ENCODE measurements at regions of chr5 and their contacts with region 1.

Region 1: GRCh38 chr5:67773411-67774266 is 441.9 kb upstream of the PIK3R1 start:
- DNase-seq: peak; percentile 40 to 76
- H3K4me3 ChIP-seq: no peak overlapping the region
- H3K4me3 Mint-ChIP-seq: no peak overlapping the region
- H3K27ac Mint-ChIP-seq: peak overlapping the region; percentile 72
- H3K4me1 ChIP-seq: peaks cover 60% of the 10 kb centered on the region
- H3K4me1 Mint-ChIP-seq: peaks cover 40% of the 10 kb centered on the region
- H3K27me3 ChIP-seq: no peaks in the 10 kb centered on the region
- H3K27me3 Mint-ChIP-seq: no peaks in the 10 kb centered on the region
- CTCF ChIP-seq: no peak

Region 2: DNA sequence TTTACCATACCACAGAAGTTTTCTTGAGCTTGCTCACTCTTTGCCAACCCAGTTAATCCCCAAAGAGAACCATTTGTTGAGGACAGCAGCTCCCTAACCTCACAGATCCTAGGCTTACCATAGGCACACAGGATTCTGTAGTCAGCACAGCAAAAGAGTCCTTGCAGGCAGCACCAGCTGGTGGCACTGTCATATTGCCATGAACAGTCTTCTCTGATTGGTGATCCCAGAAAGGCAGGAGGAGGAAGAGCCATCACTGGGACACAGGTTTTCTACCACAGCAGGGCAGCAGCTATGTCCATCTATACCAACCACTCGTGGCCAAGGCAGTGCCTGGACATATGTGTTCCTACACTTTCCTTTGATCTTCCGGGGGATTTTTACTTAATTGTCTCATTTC is 280.0 kb before region 1 on chr5:
- CTCF ChIA-PET with region 1: no interaction called
- POLR2A ChIA-PET with region 1: no interaction called
- intact Hi-C with region 1: loop called (anchors 2 kb)
- DNase-seq: peak; percentile 62 to 64
- H3K4me3 ChIP-seq: no peak overlapping the region
- H3K4me3 Mint-ChIP-seq: no peak overlapping the region
- H3K27ac Mint-ChIP-seq: peak overlapping the region; percentile 68
- H3K4me1 ChIP-seq: no peaks in the 10 kb centered on the region
- H3K4me1 Mint-ChIP-seq: no peaks in the 10 kb centered on the region
- H3K27me3 ChIP-seq: no peaks in the 10 kb centered on the region
- H3K27me3 Mint-ChIP-seq: no peaks in the 10 kb centered on the region
- CTCF ChIP-seq: peak; percentile 23 to 62

Region 3: DNA sequence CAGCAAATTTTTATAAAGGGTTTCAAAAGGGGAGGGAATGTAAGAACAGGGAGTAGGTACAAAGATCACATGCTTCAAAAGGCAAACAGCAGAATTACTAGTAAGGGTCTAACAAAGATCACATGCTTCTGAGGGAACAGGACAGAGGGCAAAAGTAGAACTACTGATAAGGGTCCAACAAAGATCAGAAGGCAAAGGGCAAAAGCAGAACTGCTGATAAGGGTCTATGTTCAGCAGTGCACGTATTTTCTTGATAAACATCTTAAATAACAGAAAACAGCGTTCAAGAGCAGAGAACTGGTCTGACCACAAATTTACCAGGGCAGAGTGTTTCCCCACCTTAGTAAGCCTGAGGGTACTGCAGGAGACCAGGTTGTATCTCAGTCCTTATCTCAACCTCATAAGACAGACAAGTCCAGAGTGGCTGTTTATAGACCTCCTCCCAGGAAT is 27.5 kb before region 1 on chr5:
- CTCF ChIA-PET with region 1: no interaction called
- POLR2A ChIA-PET with region 1: no interaction called
- intact Hi-C with region 1: loop called (anchors 1 kb)
- DNase-seq: peak; percentile 83 to 89
- H3K4me3 ChIP-seq: no peak overlapping the region
- H3K4me3 Mint-ChIP-seq: peak overlapping the region; percentile 3
- H3K27ac Mint-ChIP-seq: peak overlapping the region; percentile 92
- H3K4me1 ChIP-seq: peaks cover 39% of the 10 kb centered on the region
- H3K4me1 Mint-ChIP-seq: peaks cover 25% of the 10 kb centered on the region
- H3K27me3 ChIP-seq: no peaks in the 10 kb centered on the region
- H3K27me3 Mint-ChIP-seq: no peaks in the 10 kb centered on the region
- CTCF ChIP-seq: no peak

Region 4: GRCh38 chr5:67815455-67816391 is 42.1 kb after region 1 on chr5:
- CTCF ChIA-PET with region 1: interaction called, 4 read pairs
- POLR2A ChIA-PET with region 1: no interaction called
- intact Hi-C with region 1: loop called (anchors 1 kb)
- DNase-seq: peak in 1 of 2 experiments; percentile 18
- H3K4me3 ChIP-seq: no peak overlapping the region
- H3K4me3 Mint-ChIP-seq: no peak overlapping the region
- H3K27ac Mint-ChIP-seq: peak overlapping the region; percentile 63
- H3K4me1 ChIP-seq: peaks cover 26% of the 10 kb centered on the region
- H3K4me1 Mint-ChIP-seq: peaks cover 22% of the 10 kb centered on the region
- H3K27me3 ChIP-seq: no peaks in the 10 kb centered on the region
- H3K27me3 Mint-ChIP-seq: no peaks in the 10 kb centered on the region
- CTCF ChIP-seq: no peak

Region 5: DNA sequence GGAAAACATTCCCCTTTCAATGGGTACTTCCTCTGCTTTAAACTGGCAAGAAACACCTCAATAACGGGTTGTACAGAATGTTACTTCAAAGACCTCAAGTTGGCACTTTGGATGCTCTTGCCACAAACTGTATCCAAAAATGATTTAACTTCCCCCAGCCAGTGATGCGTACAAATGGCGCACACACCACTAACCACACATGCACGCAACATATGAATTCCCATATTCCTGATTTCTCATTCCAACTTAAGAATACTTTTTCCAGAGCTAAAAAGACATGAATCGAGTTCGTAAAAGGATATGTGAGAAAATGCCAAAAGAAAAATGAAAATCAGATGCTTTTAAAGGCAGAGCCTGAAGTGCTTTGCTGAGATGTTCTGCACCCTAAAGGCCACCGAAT is 53.9 kb after region 1 on chr5:
- CTCF ChIA-PET with region 1: no interaction called
- POLR2A ChIA-PET with region 1: no interaction called
- intact Hi-C with region 1: no loop called
- DNase-seq: no peak
- H3K4me3 ChIP-seq: no peak overlapping the region
- H3K4me3 Mint-ChIP-seq: no peak overlapping the region
- H3K27ac Mint-ChIP-seq: no peak overlapping the region
- H3K4me1 ChIP-seq: no peaks in the 10 kb centered on the region
- H3K4me1 Mint-ChIP-seq: peaks cover 6% of the 10 kb centered on the region
- H3K27me3 ChIP-seq: no peaks in the 10 kb centered on the region
- H3K27me3 Mint-ChIP-seq: no peaks in the 10 kb centered on the region
- CTCF ChIP-seq: no peak

Region 6: GRCh38 chr5:67879620-67880510 is 106.2 kb after region 1 on chr5:
- CTCF ChIA-PET with region 1: no interaction called
- POLR2A ChIA-PET with region 1: no interaction called
- intact Hi-C with region 1: loop called (anchors 1 kb)
- DNase-seq: peak; percentile 56 to 65
- H3K4me3 ChIP-seq: no peak overlapping the region
- H3K4me3 Mint-ChIP-seq: peak overlapping the region; percentile 33
- H3K27ac Mint-ChIP-seq: peak overlapping the region; percentile 91
- H3K4me1 ChIP-seq: peaks cover 46% of the 10 kb centered on the region
- H3K4me1 Mint-ChIP-seq: peaks cover 40% of the 10 kb centered on the region
- H3K27me3 ChIP-seq: no peaks in the 10 kb centered on the region
- H3K27me3 Mint-ChIP-seq: no peaks in the 10 kb centered on the region
- CTCF ChIP-seq: no peak

Region 7: GRCh38 chr5:68187268-68188055 is 413.8 kb after region 1 on chr5:
- CTCF ChIA-PET with region 1: no interaction called
- POLR2A ChIA-PET with region 1: interaction called, 10 read pairs
- intact Hi-C with region 1: no loop called
- DNase-seq: no peak
- H3K4me3 ChIP-seq: no peak overlapping the region
- H3K4me3 Mint-ChIP-seq: no peak overlapping the region
- H3K27ac Mint-ChIP-seq: no peak overlapping the region
- H3K4me1 ChIP-seq: peaks cover 27% of the 10 kb centered on the region
- H3K4me1 Mint-ChIP-seq: peaks cover 24% of the 10 kb centered on the region
- H3K27me3 ChIP-seq: no peaks in the 10 kb centered on the region
- H3K27me3 Mint-ChIP-seq: no peaks in the 10 kb centered on the region
- CTCF ChIP-seq: no peak

Measured in Caco-2 (cell line).